ENCODE measurements at regions of chr1 and their contacts with region 1.

Region 1: GRCh38 chr1:32773018-32773763 is 44.0 kb downstream of the YARS1 start:
- DNase-seq: peak; percentile 74 to 92
- H3K4me3 ChIP-seq: no peak overlapping the region
- H3K27ac ChIP-seq: no peak overlapping the region
- H3K4me1 ChIP-seq: peaks cover 0 to 22% (median 9%) of the 10 kb centered on the region in 4 experiments; a peak in 6 of 7 replicates
- H3K27me3 ChIP-seq: no peaks in the 10 kb centered on the region
- CTCF ChIP-seq: peak; percentile 93 to 96 (median 95)
- EP300 ChIP-seq: no peak
- POLR2A ChIP-seq: 0 out of 3 replicates have a peak, but pooled peaks of 1 of the 2 experiments have one; percentile 57
- RAD21 ChIP-seq: peak; percentile 93 to 94

Region 2: GRCh38 chr1:32676945-32677344 is 96.2 kb before region 1 on chr1:
- CTCF ChIA-PET with region 1: interaction called, 13 read pairs
- POLR2A ChIA-PET with region 1: interaction called, 8 read pairs
- DNase-seq: no peak
- H3K4me3 ChIP-seq: no peak overlapping the region
- H3K27ac ChIP-seq: no peak overlapping the region
- H3K4me1 ChIP-seq: no peaks in the 10 kb centered on the region
- H3K27me3 ChIP-seq: no peaks in the 10 kb centered on the region
- CTCF ChIP-seq: no peak
- EP300 ChIP-seq: no peak
- POLR2A ChIP-seq: no peak
- RAD21 ChIP-seq: no peak

Region 3: GRCh38 chr1:32702599-32703478 is 70.4 kb before region 1 on chr1 and contains the start of gene SYNC:
- CTCF ChIA-PET with region 1: interaction called, 68 read pairs
- POLR2A ChIA-PET with region 1: interaction called, 53 read pairs
- DNase-seq: no peak
- H3K4me3 ChIP-seq: peak within 1 kb of the TSS; percentile 29 to 69 (median 46)
- H3K27ac ChIP-seq: no peak within 1 kb of the TSS
- H3K4me1 ChIP-seq: peaks cover 0 to 15% (median 6%) of the 10 kb centered on the region in 4 experiments; a peak in 6 of 7 replicates
- H3K27me3 ChIP-seq: peaks cover 5 to 35% (median 29%) of the 10 kb centered on the region in 4 experiments
- CTCF ChIP-seq: no peak
- EP300 ChIP-seq: no peak
- POLR2A ChIP-seq: no peak
- RAD21 ChIP-seq: no peak
- total RNA-seq, gene SYNC: 0.17 TPM in 1 of 2 replicates, not detected in the other

Region 4: GRCh38 chr1:32733582-32734321 is 39.4 kb before region 1 on chr1:
- CTCF ChIA-PET with region 1: interaction called, 55 read pairs
- POLR2A ChIA-PET with region 1: interaction called, 21 read pairs
- DNase-seq: no peak
- H3K4me3 ChIP-seq: no peak overlapping the region
- H3K27ac ChIP-seq: no peak overlapping the region
- H3K4me1 ChIP-seq: peaks cover 11 to 16% (median 14%) of the 10 kb centered on the region in 4 experiments
- H3K27me3 ChIP-seq: peaks cover 0 to 4% (median 0%) of the 10 kb centered on the region in 4 experiments; a peak in 1 of 7 replicates
- CTCF ChIP-seq: no peak
- EP300 ChIP-seq: no peak
- POLR2A ChIP-seq: no peak
- RAD21 ChIP-seq: no peak

Region 5: GRCh38 chr1:32761253-32761880 is 11.8 kb before region 1 on chr1:
- CTCF ChIA-PET with region 1: interaction called, 220 read pairs
- POLR2A ChIA-PET with region 1: interaction called, 295 read pairs
- DNase-seq: peak in 1 of 2 experiments; percentile 54
- H3K4me3 ChIP-seq: peak overlapping the region in 2 of 4 experiments; percentile 12 to 51; a peak in 2 of 8 replicates
- H3K27ac ChIP-seq: peak overlapping the region; percentile 87
- H3K4me1 ChIP-seq: peaks cover 35 to 60% (median 46%) of the 10 kb centered on the region in 4 experiments
- H3K27me3 ChIP-seq: no peaks in the 10 kb centered on the region
- CTCF ChIP-seq: 0 out of 4 replicates have a peak, but pooled peaks of 1 of the 3 experiments have one; percentile 1
- EP300 ChIP-seq: 0 out of 3 replicates have a peak, but pooled peaks of 1 of the 2 experiments have one; percentile 50
- POLR2A ChIP-seq: no peak
- RAD21 ChIP-seq: peak in 1 of 2 experiments; percentile 15; a peak in 2 of 4 replicates

Region 6: GRCh38 chr1:32817159-32817814 is 44.1 kb after region 1 on chr1 and contains the starts of genes S100PBP and YARS1:
- CTCF ChIA-PET with region 1: no interaction called
- POLR2A ChIA-PET with region 1: interaction called, 26 read pairs
- DNase-seq: peak; percentile 97 to 100
- H3K4me3 ChIP-seq: peak within 1 kb of the TSS; percentile 81 to 99 (median 93)
- H3K27ac ChIP-seq: peak within 1 kb of the TSS; percentile 95
- H3K4me1 ChIP-seq: peaks cover 0 to 7% (median 4%) of the 10 kb centered on the region in 4 experiments; a peak in 3 of 7 replicates
- H3K27me3 ChIP-seq: no peaks in the 10 kb centered on the region
- CTCF ChIP-seq: no peak
- EP300 ChIP-seq: peak in 1 of 2 experiments; percentile 96; a peak in 2 of 3 replicates
- POLR2A ChIP-seq: peak in 1 of 2 experiments; percentile 65; a peak in 2 of 3 replicates
- RAD21 ChIP-seq: no peak
- total RNA-seq, gene S100PBP: 65.7 and 68.3 TPM in 2 replicates
- total RNA-seq, gene YARS1: 226 and 230 TPM in 2 replicates

Measured in H1 (cell line).